ENCODE measurements at regions of chr3 and their contacts with region 1.

Region 1: GRCh38 chr3:185983495-185984141 is 45.8 kb upstream of the TRA2B start:
- DNase-seq: peak; percentile 85
- ATAC-seq: peak; percentile 92

Region 2: GRCh38 chr3:186035277-186035676 is 51.7 kb after region 1 on chr3:
- intact Hi-C with region 1: no loop called
- DNase-seq: no peak
- ATAC-seq: no peak

Region 3: DNA sequence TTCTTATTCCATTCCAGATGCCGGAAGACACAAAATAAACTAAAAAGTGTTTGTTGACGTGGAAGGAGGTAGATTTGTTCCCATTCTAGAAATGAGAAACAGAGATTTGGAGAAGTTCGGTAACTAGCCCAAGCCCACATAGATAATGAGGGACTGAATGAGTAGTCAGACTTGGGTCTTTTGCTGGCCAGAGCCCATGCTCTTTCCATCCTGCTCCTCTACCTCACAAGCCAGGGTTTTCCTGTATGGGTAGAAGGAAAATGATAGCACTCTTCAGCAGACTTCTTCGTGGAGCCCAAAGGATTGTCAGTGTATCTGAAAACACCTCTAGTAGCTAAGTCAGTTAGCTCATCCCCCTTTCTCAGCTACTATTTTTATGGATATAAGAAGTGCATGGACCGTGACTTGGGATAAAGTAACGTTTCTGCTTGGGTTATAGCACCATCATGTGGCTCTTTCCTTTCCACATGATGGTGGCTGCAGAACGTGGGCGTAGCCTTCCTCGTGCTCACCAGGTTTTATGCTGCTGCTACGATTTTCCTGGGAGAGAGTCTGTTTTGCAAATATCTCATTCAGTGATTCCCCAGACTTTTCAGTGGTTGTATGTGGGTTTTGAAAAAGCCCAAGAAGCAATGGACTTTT is 293.8 kb after region 1 on chr3:
- intact Hi-C with region 1: loop called (anchors 10 kb)
- DNase-seq: no peak
- ATAC-seq: peak; percentile 87